CD4-positive, alpha-beta memory T cell (primary cell): ENCODE measurements at regions of chr18 and their contacts with region 1.

Region 1: GRCh38 chr18:23131693-23132319 is 3.5 kb upstream of the CABLES1 start:
- DNase-seq: peak; percentile 54 to 67 (median 58)
- H3K4me3 ChIP-seq: no peak overlapping the region
- H3K4me3 Mint-ChIP-seq: peak overlapping the region in 1 of 8 donors; percentile 22
- H3K27ac ChIP-seq: no peak overlapping the region
- H3K27ac Mint-ChIP-seq: no peak overlapping the region
- H3K4me1 ChIP-seq: peaks cover 19% of the 10 kb centered on the region
- H3K4me1 Mint-ChIP-seq: peaks cover 9 to 18% (median 11%) of the 10 kb centered on the region in 4 donors
- H3K27me3 ChIP-seq: peaks cover 15% of the 10 kb centered on the region
- H3K27me3 Mint-ChIP-seq: peaks cover 19 to 21% of the 10 kb centered on the region in 2 donors

Region 2: GRCh38 chr18:23032030-23032582 is 99.7 kb before region 1 on chr18:
- CTCF ChIA-PET with region 1: interaction called, 17 read pairs
- POLR2A ChIA-PET with region 1: no interaction called
- intact Hi-C with region 1: loop called (anchors 1 kb)
- DNase-seq: no peak
- H3K4me3 ChIP-seq: no peak overlapping the region
- H3K4me3 Mint-ChIP-seq: no peak overlapping the region
- H3K27ac ChIP-seq: no peak overlapping the region
- H3K27ac Mint-ChIP-seq: no peak overlapping the region
- H3K4me1 ChIP-seq: no peaks in the 10 kb centered on the region
- H3K4me1 Mint-ChIP-seq: peaks cover 0 to 3% (median 0%) of the 10 kb centered on the region in 4 donors
- H3K27me3 ChIP-seq: no peaks in the 10 kb centered on the region
- H3K27me3 Mint-ChIP-seq: no peaks in the 10 kb centered on the region

Region 3: DNA sequence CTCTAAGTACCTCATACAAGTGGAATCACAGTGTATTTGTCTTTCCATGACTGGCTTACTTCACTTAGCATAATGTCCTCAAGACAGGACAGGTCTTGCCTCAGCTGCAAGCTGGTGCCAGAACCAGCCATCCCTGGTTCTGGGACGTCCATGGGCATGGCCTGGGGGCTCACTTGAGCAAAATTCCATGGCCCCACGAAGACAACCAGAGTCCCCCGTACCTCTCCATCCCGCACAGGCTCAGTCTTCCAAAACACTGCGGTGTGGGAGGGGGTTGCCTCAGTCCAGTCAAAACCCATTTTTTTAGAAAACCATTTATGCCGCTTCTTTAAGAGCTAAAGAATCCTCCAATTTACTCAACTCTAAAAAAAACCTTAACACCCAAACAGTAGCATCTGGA is 18.2 kb before region 1 on chr18:
- CTCF ChIA-PET with region 1: interaction called, 11 read pairs
- POLR2A ChIA-PET with region 1: no interaction called
- intact Hi-C with region 1: no loop called
- DNase-seq: no peak
- H3K4me3 ChIP-seq: no peak overlapping the region
- H3K4me3 Mint-ChIP-seq: no peak overlapping the region
- H3K27ac ChIP-seq: no peak overlapping the region
- H3K27ac Mint-ChIP-seq: no peak overlapping the region
- H3K4me1 ChIP-seq: peaks cover 13% of the 10 kb centered on the region
- H3K4me1 Mint-ChIP-seq: peaks cover 8 to 17% (median 12%) of the 10 kb centered on the region in 4 donors
- H3K27me3 ChIP-seq: no peaks in the 10 kb centered on the region
- H3K27me3 Mint-ChIP-seq: peaks cover 0 to 4% of the 10 kb centered on the region in 2 donors

Region 4: GRCh38 chr18:23200746-23201145 is 68.9 kb after region 1 on chr18:
- CTCF ChIA-PET with region 1: no interaction called
- POLR2A ChIA-PET with region 1: no interaction called
- intact Hi-C with region 1: no loop called
- DNase-seq: no peak
- H3K4me3 ChIP-seq: no peak overlapping the region
- H3K4me3 Mint-ChIP-seq: no peak overlapping the region
- H3K27ac ChIP-seq: no peak overlapping the region
- H3K27ac Mint-ChIP-seq: no peak overlapping the region
- H3K4me1 ChIP-seq: no peaks in the 10 kb centered on the region
- H3K4me1 Mint-ChIP-seq: peaks cover 0 to 5% (median 4%) of the 10 kb centered on the region in 4 donors
- H3K27me3 ChIP-seq: no peaks in the 10 kb centered on the region
- H3K27me3 Mint-ChIP-seq: peaks cover 5 to 6% of the 10 kb centered on the region in 2 donors

Region 5: DNA sequence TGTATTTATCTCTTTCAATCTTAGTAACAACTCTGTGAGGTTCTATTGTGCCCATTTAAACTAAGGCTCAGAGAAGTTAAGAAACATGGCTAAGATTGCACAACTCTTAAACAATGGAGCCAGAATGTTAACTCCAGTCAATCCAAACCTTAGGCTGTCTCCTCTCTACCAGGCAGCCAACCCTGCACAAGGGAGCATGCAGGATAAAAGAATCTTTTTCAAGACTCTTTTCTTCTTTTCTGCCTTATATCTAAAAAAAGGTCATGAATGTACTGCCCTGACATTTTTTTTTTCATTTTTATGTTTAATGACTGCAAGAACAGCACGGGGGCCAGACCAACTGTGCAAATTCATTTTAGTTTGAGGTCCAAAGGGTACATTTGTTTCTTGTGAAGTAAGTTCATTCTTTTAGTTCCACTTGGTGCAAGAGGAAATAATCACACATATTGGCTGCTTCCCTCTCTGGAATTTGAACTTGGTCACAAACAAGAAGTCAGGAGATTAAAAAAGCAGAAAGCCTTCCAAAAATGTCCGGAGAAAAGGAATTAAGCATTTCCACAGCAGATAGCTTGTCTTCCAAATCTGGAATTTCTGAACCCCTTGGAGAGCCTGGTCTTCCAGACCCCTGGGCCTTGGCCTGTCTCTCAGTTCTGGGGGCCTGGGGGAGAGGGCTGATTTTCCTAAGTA is 225.3 kb after region 1 on chr18:
- CTCF ChIA-PET with region 1: interaction called, 38 read pairs
- POLR2A ChIA-PET with region 1: no interaction called
- intact Hi-C with region 1: loop called (anchors 1 kb)
- DNase-seq: no peak
- H3K4me3 ChIP-seq: no peak overlapping the region
- H3K4me3 Mint-ChIP-seq: no peak overlapping the region
- H3K27ac ChIP-seq: no peak overlapping the region
- H3K27ac Mint-ChIP-seq: no peak overlapping the region
- H3K4me1 ChIP-seq: peaks cover 12% of the 10 kb centered on the region
- H3K4me1 Mint-ChIP-seq: peaks cover 4 to 15% (median 10%) of the 10 kb centered on the region in 4 donors
- H3K27me3 ChIP-seq: no peaks in the 10 kb centered on the region
- H3K27me3 Mint-ChIP-seq: no peaks in the 10 kb centered on the region

Region 6: DNA sequence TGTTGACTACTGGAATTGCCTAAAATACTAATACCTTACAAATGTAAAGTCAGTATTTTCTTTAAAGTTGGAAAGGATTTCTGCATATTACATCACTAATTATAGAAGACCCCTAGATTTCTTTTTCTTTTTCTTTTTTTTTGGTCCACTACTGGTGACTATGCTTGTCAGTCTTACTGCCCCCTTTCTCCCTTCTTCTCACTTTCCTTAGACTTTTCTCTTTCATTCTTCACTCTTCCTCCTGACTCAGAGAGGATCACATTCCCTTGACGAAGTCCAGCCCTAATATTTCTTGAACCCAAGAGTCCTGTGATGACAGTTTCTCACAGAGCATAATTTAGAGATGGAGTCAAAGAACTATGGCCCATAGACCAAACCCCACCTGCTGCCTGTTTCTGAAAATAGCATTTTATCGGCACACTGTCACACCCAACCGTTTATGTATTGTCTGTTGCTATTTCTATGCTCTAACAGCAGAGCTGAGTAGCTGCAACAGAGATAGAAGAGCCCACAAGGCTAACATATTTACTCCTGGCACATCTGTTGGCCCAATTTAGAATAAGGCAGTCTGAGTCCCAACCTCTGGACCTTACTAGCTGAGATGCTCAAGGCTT is 280.7 kb after region 1 on chr18:
- CTCF ChIA-PET with region 1: interaction called, 35 read pairs
- POLR2A ChIA-PET with region 1: no interaction called
- intact Hi-C with region 1: loop called (anchors 1 kb)
- DNase-seq: no peak
- H3K4me3 ChIP-seq: no peak overlapping the region
- H3K4me3 Mint-ChIP-seq: no peak overlapping the region
- H3K27ac ChIP-seq: no peak overlapping the region
- H3K27ac Mint-ChIP-seq: no peak overlapping the region
- H3K4me1 ChIP-seq: no peaks in the 10 kb centered on the region
- H3K4me1 Mint-ChIP-seq: peaks cover 0 to 1% (median 0%) of the 10 kb centered on the region in 4 donors
- H3K27me3 ChIP-seq: no peaks in the 10 kb centered on the region
- H3K27me3 Mint-ChIP-seq: no peaks in the 10 kb centered on the region

Region 7: GRCh38 chr18:23812546-23813440 is 681.0 kb after region 1 on chr18:
- CTCF ChIA-PET with region 1: no interaction called
- POLR2A ChIA-PET with region 1: no interaction called
- intact Hi-C with region 1: loop called (anchors 5 kb)
- DNase-seq: peak in 4 of 5 donors; percentile 28 to 39 (median 32)
- H3K4me3 ChIP-seq: no peak overlapping the region
- H3K4me3 Mint-ChIP-seq: no peak overlapping the region
- H3K27ac ChIP-seq: no peak overlapping the region
- H3K27ac Mint-ChIP-seq: no peak overlapping the region
- H3K4me1 ChIP-seq: peaks cover 13% of the 10 kb centered on the region
- H3K4me1 Mint-ChIP-seq: peaks cover 2 to 16% (median 12%) of the 10 kb centered on the region in 4 donors
- H3K27me3 ChIP-seq: no peaks in the 10 kb centered on the region
- H3K27me3 Mint-ChIP-seq: no peaks in the 10 kb centered on the region

Region 8: DNA sequence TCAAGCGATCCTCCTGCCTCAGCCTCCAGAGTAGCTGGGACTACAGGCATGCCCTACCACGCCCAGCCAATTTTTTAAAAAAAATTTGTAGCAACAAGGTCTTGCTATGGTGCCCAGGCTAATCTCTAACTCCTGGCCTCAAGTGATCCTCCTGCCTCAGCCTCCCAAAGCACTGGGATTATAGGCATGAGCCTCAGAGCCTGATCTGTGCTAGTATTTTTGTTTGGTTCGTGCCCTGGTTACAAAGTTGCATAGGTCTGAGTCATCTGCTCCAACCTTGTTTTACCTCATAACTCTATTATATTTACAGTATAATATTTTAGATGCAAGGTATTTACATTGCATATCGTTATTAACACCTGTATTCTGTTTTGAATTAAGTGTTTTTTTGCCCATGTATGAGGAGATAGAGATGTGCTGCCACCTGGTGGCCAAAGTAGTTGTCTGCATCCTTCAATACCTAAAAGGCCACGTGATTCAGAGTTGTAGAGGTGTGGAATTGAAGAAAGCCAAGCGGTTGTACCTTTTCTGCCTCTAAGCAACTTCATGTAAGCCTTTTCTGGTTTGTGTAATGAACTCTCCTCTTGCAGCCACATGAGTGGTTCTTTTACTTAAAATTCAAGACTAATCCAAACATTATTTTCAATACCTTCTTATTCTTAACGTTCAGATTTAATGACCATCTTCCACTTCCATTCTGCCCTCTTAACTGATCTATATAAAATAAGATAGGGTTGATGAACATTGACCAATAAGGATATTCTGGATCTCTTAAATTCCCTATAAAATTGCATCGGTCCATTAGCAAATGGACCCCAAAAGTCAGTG is 987.2 kb after region 1 on chr18:
- CTCF ChIA-PET with region 1: no interaction called
- POLR2A ChIA-PET with region 1: no interaction called
- intact Hi-C with region 1: no loop called
- DNase-seq: peak; percentile 72 to 78 (median 76)
- H3K4me3 ChIP-seq: no peak overlapping the region
- H3K4me3 Mint-ChIP-seq: no peak overlapping the region
- H3K27ac ChIP-seq: no peak overlapping the region
- H3K27ac Mint-ChIP-seq: peak overlapping the region; percentile 37 to 79 (median 50)
- H3K4me1 ChIP-seq: peaks cover 16% of the 10 kb centered on the region
- H3K4me1 Mint-ChIP-seq: peaks cover 16 to 31% (median 23%) of the 10 kb centered on the region in 4 donors
- H3K27me3 ChIP-seq: no peaks in the 10 kb centered on the region
- H3K27me3 Mint-ChIP-seq: no peaks in the 10 kb centered on the region